HEK293 (cell line): ENCODE measurements at regions of chr11 and their contacts with region 1.

Region 1: DNA sequence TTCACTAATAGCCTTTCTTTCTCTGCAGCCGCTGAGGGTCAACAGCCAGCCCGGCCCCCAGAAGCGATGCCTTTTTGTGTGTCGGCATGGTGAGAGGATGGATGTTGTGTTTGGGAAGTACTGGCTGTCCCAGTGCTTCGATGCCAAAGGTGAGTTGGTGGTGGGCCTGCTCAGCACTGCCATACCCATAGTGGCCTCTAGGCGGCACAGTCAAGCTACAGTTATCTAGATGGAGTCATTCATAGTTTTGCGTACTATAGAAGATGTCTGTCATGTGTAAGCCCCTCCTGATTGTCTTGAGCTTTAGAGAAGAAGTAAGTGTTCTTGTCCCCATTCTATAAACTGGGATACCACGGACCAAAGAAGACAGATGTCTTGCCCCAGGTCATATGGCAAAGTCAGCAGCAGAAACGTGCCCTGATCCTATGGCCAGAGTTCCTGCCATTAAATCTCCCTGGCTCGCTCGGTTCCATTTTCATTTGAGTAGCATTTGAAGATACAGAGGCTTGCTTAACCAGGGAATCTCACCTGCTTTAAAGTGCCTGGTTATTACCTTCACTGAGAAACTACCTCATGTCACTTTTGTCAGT is 42.1 kb upstream of the CRTAM start:
- H3K4me3 ChIP-seq: no peak overlapping the region
- H3K27ac ChIP-seq: no peak overlapping the region
- H3K4me1 ChIP-seq: no peaks in the 10 kb centered on the region
- CTCF ChIP-seq: no peak

Region 2: GRCh38 chr11:122690801-122691548 is 105.2 kb before region 1 on chr11:
- CTCF ChIA-PET with region 1: no interaction called
- POLR2A ChIA-PET with region 1: no interaction called
- H3K4me3 ChIP-seq: no peak overlapping the region
- H3K27ac ChIP-seq: no peak overlapping the region
- H3K4me1 ChIP-seq: no peaks in the 10 kb centered on the region
- CTCF ChIP-seq: no peak

Region 3: GRCh38 chr11:122808478-122808869 is 12.3 kb after region 1 on chr11:
- CTCF ChIA-PET with region 1: interaction called, 24 read pairs
- POLR2A ChIA-PET with region 1: no interaction called
- H3K4me3 ChIP-seq: no peak overlapping the region
- H3K27ac ChIP-seq: no peak overlapping the region
- H3K4me1 ChIP-seq: no peaks in the 10 kb centered on the region
- CTCF ChIP-seq: no peak

Region 4: DNA sequence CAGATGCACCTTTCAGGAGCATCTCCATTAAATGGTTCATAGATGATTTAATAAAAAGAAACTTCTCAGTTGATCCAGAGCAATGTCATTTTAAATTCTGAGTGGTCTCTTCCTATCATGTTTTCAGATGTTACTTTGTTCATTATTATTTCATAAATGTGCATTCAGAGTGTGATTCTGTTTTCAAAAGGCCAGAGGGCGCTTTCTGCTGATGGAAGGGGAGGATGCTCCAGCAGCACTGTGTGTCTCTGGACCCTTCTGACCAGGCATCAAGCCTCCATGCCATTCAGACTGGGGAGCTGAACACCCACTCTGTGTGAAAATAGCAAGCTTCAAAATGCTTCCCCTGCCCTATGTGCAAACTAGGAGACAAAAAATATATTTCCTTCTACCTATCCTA is 18.2 kb after region 1 on chr11:
- CTCF ChIA-PET with region 1: interaction called, 24 read pairs
- POLR2A ChIA-PET with region 1: no interaction called
- H3K4me3 ChIP-seq: no peak overlapping the region
- H3K27ac ChIP-seq: no peak overlapping the region
- H3K4me1 ChIP-seq: no peaks in the 10 kb centered on the region
- CTCF ChIP-seq: no peak